Thyroid gland (tissue), 4 donors: ENCODE measurements at regions of chr5 and their contacts with region 1.

Region 1: GRCh38 chr5:80686757-80687156 is 32.0 kb upstream of the DHFR start:
- DNase-seq: no peak
- H3K4me3 ChIP-seq: no peak overlapping the region
- H3K27ac ChIP-seq: no peak overlapping the region
- H3K4me1 ChIP-seq: no peaks in the 10 kb centered on the region
- H3K27me3 ChIP-seq: no peaks in the 10 kb centered on the region
- CTCF ChIP-seq: peak in 4 of 6 experiments; percentile 7 to 72 (median 54)
- POLR2A ChIP-seq: no peak

Region 2: GRCh38 chr5:81194633-81195333 is 508.0 kb after region 1 on chr5:
- intact Hi-C with region 1: loop called (anchors 10 kb)
- DNase-seq: peak; percentile 76 to 85
- H3K4me3 ChIP-seq: no peak overlapping the region
- H3K27ac ChIP-seq: no peak overlapping the region
- H3K4me1 ChIP-seq: peaks cover 0 to 6% of the 10 kb centered on the region in 2 donors
- H3K27me3 ChIP-seq: no peaks in the 10 kb centered on the region
- CTCF ChIP-seq: peak; percentile 73 to 95 (median 80)
- POLR2A ChIP-seq: no peak